Aorta (tissue), 5 donors: ENCODE measurements at regions of chr1 and their contacts with region 1.

Region 1: GRCh38 chr1:108559215-108560186 is at the start of gene EEIG2:
- DNase-seq: peak; percentile 92 to 94
- ATAC-seq: peak; percentile 97
- H3K4me3 ChIP-seq: peak within 1 kb of the TSS; percentile 78 to 95
- H3K27ac ChIP-seq: peak within 1 kb of the TSS; percentile 24 to 77
- H3K4me1 ChIP-seq: peaks cover 0 to 4% of the 10 kb centered on the region in 2 donors
- H3K27me3 ChIP-seq: no peaks in the 10 kb centered on the region
- total RNA-seq, gene EEIG2: 13.6 to 34.9 TPM

Region 2: GRCh38 chr1:108512239-108512981 is 47.1 kb before region 1 on chr1:
- intact Hi-C with region 1: loop called (anchors 5 kb)
- DNase-seq: no peak
- ATAC-seq: no peak
- H3K4me3 ChIP-seq: no peak overlapping the region
- H3K27ac ChIP-seq: no peak overlapping the region
- H3K4me1 ChIP-seq: no peaks in the 10 kb centered on the region
- H3K27me3 ChIP-seq: peaks cover 0 to 3% of the 10 kb centered on the region in 2 donors

Region 3: DNA sequence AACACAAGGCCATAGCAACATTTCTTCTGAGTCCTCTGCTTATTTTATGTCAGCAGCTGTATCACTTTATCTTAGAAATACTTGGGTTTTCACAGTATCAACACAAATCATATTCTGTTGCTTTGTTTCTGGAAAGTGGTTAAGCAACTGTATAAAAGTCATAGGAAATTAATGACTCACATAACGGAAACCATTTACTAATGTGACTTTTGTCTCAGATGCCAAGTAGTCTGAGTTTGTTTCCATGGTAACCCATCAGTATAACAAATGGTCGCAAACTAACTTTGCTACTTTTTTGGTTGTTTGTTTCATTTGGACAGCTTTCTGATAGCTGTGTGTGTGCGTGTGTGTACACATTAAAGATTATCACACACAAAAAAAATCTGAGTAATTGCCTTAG is 31.5 kb after region 1 on chr1:
- intact Hi-C with region 1: loop called in 1 of 2 experiments (anchors 5 kb)
- DNase-seq: no peak
- ATAC-seq: peak; percentile 89
- H3K4me3 ChIP-seq: no peak overlapping the region
- H3K27ac ChIP-seq: no peak overlapping the region
- H3K4me1 ChIP-seq: peaks cover 0 to 9% of the 10 kb centered on the region in 2 donors
- H3K27me3 ChIP-seq: no peaks in the 10 kb centered on the region

Region 4: GRCh38 chr1:108609483-108610049 is 50.1 kb after region 1 on chr1:
- intact Hi-C with region 1: loop called in 1 of 2 experiments (anchors 10 kb)
- DNase-seq: no peak
- ATAC-seq: no peak
- H3K4me3 ChIP-seq: no peak overlapping the region
- H3K27ac ChIP-seq: no peak overlapping the region
- H3K4me1 ChIP-seq: peaks cover 3 to 6% of the 10 kb centered on the region in 2 donors
- H3K27me3 ChIP-seq: no peaks in the 10 kb centered on the region

Region 5: DNA sequence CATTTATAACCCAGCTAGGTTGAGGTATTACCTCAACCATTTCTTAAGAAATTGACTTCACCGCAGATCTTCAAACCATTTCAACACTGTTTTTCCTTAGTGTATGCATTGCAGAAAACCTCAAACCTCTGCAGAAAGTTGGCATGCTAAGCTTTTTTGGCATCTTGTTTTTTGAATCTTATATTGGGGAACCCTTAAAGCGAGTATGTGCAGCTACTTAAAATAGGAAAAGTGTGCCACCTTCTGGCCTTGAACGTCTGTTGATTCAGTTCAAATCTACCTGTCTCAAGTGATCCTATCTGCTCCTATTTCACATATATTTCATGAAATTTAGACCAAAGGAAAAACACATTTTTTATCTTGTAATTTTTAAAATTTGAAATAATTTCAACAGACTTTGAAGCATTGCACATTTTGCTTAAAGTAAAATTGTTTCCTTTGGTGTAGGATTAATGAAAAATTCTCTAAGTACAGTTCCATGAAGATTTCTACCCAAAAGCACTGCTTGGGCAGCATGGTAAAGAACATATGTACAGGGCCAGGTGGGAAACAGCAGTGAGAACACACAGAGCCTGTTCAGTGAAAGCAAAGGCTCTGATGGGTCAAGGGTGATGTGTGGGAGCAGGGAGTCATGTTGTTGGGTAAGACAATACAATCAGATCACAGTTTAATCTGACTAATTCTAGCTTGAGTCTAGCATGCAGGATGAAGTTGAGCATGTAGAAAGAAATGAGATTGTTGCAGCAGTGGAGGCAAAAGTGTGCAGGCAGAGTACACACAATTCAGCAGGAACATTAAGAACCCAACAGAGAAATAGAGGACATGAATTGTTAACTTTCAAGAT is 84.2 kb after region 1 on chr1:
- intact Hi-C with region 1: loop called in 1 of 2 experiments (anchors 5 kb)
- DNase-seq: no peak
- ATAC-seq: peak; percentile 77
- H3K4me3 ChIP-seq: no peak overlapping the region
- H3K27ac ChIP-seq: no peak overlapping the region
- H3K4me1 ChIP-seq: no peaks in the 10 kb centered on the region
- H3K27me3 ChIP-seq: no peaks in the 10 kb centered on the region

Region 6: GRCh38 chr1:108670131-108670773 is 110.8 kb after region 1 on chr1:
- intact Hi-C with region 1: no loop called
- DNase-seq: no peak
- ATAC-seq: no peak
- H3K4me3 ChIP-seq: no peak overlapping the region
- H3K27ac ChIP-seq: no peak overlapping the region
- H3K4me1 ChIP-seq: no peaks in the 10 kb centered on the region
- H3K27me3 ChIP-seq: no peaks in the 10 kb centered on the region

Region 7: DNA sequence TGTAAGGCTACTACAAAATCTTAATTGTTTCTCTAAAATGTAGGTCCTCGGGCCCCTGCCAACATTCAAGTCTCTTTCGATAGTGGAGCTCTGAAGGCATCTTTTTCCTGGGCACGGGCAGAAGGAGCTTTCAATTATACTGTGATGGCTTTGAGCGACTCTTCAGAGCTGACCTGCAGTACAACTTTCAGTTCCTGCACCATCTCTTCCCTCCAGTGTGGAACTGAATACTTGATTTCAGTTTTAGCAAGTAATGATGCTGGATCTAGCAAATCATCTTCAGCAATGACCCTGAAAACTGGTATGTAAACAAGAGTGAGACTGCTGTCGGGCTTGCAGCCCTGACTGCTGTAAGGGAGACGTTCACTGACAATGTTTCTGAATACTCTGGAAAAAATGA is 162.8 kb after region 1 on chr1:
- intact Hi-C with region 1: no loop called
- DNase-seq: no peak
- ATAC-seq: no peak
- H3K4me3 ChIP-seq: no peak overlapping the region
- H3K27ac ChIP-seq: no peak overlapping the region
- H3K4me1 ChIP-seq: peaks cover 0 to 3% of the 10 kb centered on the region in 2 donors
- H3K27me3 ChIP-seq: no peaks in the 10 kb centered on the region

Region 8: GRCh38 chr1:108801101-108801500 is 241.6 kb after region 1 on chr1:
- intact Hi-C with region 1: no loop called
- DNase-seq: no peak
- ATAC-seq: no peak
- H3K4me3 ChIP-seq: no peak overlapping the region
- H3K27ac ChIP-seq: no peak overlapping the region
- H3K4me1 ChIP-seq: no peaks in the 10 kb centered on the region
- H3K27me3 ChIP-seq: no peaks in the 10 kb centered on the region